Activated CD4-positive, alpha-beta memory T cell treated with anti-CD3 and anti-CD28 coated beads for 36 hours (primary cell): ENCODE measurements at regions of chr1 and their contacts with region 1.

Region 1: DNA sequence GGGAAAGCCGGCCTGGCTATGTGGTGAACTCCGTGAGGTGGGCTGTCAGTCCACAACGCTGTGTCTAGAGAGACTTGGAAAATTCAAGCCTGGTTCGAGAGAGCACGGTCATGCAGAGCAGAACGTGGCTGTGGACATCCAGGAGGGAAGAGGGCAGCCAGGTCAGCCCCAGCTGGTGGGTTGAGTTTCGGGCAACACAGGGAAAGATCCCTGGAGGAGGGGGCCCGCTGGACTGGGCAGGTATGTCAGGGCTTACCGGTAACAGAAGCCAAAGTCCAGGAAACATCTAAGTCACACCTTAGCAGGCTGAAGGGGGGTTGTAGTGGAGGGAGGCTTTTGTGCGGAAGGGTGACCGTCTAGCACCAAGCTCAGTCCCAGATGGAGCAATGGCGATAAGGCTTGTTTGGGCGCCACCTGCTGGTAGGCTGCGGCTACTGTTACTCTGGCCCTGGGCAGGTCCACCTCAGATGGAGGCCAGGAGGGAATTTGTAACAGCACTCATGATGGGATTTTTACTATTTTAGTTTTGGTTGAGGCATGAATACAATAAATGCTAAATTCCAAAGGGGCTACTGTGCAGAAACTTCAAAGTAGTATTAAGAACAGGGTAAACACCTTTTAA is 143.3 kb upstream of the ZNF644 start:
- DNase-seq: peak; percentile 83
- H3K4me3 Mint-ChIP-seq: no peak overlapping the region
- H3K27ac Mint-ChIP-seq: no peak overlapping the region
- H3K4me1 Mint-ChIP-seq: no peaks in the 10 kb centered on the region
- H3K27me3 Mint-ChIP-seq: no peaks in the 10 kb centered on the region

Region 2: DNA sequence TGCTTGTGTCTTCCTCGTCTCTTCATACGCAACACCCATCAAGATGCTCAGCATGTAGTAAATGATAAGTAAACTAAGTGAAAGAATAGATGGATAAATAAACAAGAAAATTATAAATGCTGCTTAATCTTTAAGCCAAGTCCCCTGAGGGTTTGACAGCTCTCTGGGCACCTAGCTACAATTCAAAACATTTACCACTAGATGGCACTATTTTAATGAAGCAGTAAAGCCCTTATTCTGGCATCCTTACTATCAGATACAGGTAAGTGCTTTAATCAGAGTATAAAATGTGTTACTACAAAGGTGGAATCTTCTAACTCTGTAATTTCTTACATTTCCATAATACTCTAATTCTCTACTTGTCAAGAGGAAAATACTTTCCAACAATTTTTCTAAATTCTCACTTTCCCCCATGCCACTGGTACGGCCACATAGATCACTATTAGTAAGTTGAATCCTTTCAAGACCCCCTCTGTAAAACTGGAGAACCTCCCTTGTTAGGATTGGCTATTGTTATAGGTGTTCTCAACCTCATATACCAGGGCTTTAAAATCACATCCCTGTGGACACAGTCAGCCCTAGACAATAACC is 585.8 kb before region 1 on chr1:
- CTCF ChIA-PET with region 1: interaction called, 19 read pairs
- POLR2A ChIA-PET with region 1: no interaction called
- intact Hi-C with region 1: loop called (anchors 1 kb)
- DNase-seq: no peak
- H3K4me3 Mint-ChIP-seq: no peak overlapping the region
- H3K27ac Mint-ChIP-seq: no peak overlapping the region
- H3K4me1 Mint-ChIP-seq: no peaks in the 10 kb centered on the region
- H3K27me3 Mint-ChIP-seq: no peaks in the 10 kb centered on the region

Region 3: GRCh38 chr1:90834886-90835660 is 330.1 kb before region 1 on chr1:
- CTCF ChIA-PET with region 1: interaction called, 4 read pairs
- POLR2A ChIA-PET with region 1: no interaction called
- intact Hi-C with region 1: loop called (anchors 10 kb)
- DNase-seq: peak; percentile 46
- H3K4me3 Mint-ChIP-seq: no peak overlapping the region
- H3K27ac Mint-ChIP-seq: no peak overlapping the region
- H3K4me1 Mint-ChIP-seq: peaks cover 23% of the 10 kb centered on the region
- H3K27me3 Mint-ChIP-seq: peaks cover 79% of the 10 kb centered on the region

Region 4: DNA sequence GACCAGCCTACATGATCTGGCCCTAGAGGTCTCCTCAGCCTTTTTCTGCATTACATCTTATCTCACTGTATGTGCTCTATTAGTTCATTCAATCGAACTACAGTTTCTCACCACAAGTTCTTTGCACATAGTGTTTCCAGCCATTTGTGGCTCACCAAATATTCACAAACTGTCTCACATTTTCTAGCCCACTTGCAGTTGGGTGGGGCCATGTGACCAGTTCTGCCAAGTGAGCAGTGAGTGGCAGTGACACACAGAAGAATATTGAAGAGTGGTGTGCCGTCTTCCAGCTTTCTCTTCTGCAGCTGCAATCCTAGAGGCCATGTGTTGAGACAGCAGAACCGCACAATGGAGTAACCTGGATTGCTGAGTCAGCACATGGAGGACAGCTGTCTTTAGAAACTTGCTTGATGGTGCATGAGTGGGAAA is 40.1 kb before region 1 on chr1:
- CTCF ChIA-PET with region 1: interaction called, 27 read pairs
- POLR2A ChIA-PET with region 1: no interaction called
- intact Hi-C with region 1: loop called (anchors 1 kb)
- DNase-seq: peak; percentile 67
- H3K4me3 Mint-ChIP-seq: peak overlapping the region; percentile 24
- H3K27ac Mint-ChIP-seq: peak overlapping the region; percentile 73
- H3K4me1 Mint-ChIP-seq: peaks cover 19% of the 10 kb centered on the region
- H3K27me3 Mint-ChIP-seq: peaks cover 3% of the 10 kb centered on the region

Region 5: DNA sequence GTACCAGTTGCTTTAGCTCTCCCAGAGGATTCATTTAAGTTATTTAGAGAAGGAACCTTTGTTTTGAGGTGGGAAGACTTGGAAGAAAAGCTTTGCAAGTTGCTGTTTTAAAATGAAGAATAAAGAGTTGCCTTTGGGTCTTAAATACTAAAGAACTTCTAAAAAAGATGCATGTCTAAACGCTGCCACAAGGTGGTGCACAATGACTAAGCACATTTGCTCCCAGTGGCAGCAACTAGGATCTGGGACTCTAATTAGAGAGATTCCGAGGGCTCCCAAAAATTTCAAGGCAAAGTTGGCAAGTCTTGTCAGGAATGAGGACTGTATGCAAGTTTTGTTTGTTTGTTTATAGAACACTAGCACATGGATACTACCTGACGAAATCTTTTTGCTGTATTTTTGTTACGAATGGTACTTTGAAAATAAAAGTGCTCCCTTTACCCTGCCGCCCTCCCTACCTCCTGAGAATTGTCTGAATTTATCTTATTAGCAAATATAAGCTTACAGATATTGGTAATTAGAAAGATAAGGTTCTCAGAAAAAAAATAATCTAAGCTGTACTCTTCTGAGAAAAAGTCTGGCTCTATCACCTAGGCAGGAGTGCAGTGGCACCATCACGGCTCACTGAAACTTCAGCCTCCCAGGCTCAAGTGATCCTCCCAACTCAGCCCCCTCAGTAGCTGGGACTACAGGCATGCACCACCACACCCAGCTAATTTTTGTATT is 117.7 kb after region 1 on chr1:
- CTCF ChIA-PET with region 1: interaction called, 33 read pairs
- POLR2A ChIA-PET with region 1: no interaction called
- intact Hi-C with region 1: loop called (anchors 1 kb)
- DNase-seq: peak; percentile 38
- H3K4me3 Mint-ChIP-seq: no peak overlapping the region
- H3K27ac Mint-ChIP-seq: no peak overlapping the region
- H3K4me1 Mint-ChIP-seq: no peaks in the 10 kb centered on the region
- H3K27me3 Mint-ChIP-seq: peaks cover 2% of the 10 kb centered on the region